A673 (cell line): ENCODE measurements at regions of chr1 and their contacts with region 1.

Region 1: GRCh38 chr1:161225534-161226319 is at the start of gene TOMM40L:
- DNase-seq: peak; percentile 100
- H3K4me3 ChIP-seq: peak within 1 kb of the TSS; percentile 78
- H3K27ac ChIP-seq: peak within 1 kb of the TSS; percentile 68
- H3K4me1 ChIP-seq: peaks cover 18% of the 10 kb centered on the region
- H3K27me3 ChIP-seq: no peaks in the 10 kb centered on the region
- CTCF ChIP-seq: peak; percentile 79
- total RNA-seq, gene TOMM40L: 14.0 TPM in 2 replicates

Region 2: DNA sequence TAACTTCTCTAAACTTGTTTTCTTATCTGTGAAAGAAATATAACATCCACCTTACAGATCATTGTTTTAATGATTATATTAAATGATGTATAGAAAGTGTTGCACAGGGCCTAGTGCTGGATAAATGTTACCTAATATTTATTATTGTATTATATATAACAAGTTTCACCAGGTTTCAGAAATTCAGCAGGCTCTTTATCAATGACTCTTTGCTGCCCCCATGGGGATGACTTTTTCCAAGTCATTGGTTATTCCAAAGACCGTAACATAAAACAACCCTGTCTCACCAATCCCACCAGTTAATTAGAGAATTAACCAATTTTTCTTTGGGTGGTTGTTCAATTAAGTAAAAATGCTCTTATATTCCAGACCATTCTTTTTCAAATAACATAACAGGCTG is 86.0 kb before region 1 on chr1:
- CTCF ChIA-PET with region 1: no interaction called
- POLR2A ChIA-PET with region 1: interaction called, 17 read pairs
- intact Hi-C with region 1: no loop called
- DNase-seq: peak; percentile 69
- H3K4me3 ChIP-seq: no peak overlapping the region
- H3K27ac ChIP-seq: no peak overlapping the region
- H3K4me1 ChIP-seq: no peaks in the 10 kb centered on the region
- H3K27me3 ChIP-seq: no peaks in the 10 kb centered on the region
- CTCF ChIP-seq: peak; percentile 67

Region 3: DNA sequence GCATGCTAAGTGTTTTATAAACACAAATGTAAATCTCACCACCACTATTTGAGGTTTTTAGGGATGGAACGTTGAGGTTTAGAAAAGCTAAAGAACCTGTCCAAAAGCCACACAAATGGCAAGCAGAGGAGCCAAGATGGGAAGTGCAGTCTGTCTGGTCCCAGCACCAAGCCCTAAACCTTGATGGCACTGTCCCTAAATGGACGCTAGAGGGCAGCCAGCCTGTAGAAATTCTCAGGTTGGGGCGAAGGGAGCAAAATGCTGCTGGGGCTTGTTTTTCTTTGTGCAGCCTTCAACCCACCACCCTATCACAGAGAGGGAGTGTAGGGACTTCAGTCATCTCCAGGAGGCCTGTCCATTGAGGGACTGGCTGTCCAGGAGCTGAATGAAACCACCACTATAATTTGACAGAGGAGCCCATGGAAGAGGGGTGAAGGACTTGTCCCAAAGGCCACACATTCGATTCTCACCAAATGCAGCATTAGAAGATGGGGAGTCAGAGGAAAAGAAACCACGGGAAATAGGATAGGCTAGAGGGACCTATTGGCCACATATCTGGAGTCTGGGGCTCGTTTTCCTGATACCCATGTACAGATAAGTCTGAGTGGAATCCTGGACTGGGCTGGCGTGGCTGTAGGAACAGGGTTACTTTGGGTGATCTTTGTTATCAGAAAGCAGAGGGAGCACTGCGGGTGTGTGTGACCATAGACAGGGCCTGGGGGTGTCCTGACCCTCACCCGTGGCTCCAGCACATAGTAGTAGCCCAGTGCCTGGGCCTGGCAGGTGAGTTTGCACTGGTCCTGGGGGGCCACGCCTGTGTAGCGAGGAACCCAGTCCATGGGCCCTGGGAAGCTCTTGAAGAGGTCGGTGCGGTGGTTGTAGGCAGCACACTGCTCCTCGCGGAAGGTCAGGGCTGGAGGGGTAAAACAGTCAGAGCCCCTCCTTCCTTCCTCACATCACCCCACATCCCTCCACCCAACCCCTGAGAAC is 33.0 kb before region 1 on chr1:
- CTCF ChIA-PET with region 1: interaction called, 7 read pairs
- POLR2A ChIA-PET with region 1: no interaction called
- intact Hi-C with region 1: loop called (anchors 1 kb)
- DNase-seq: peak; percentile 85
- H3K4me3 ChIP-seq: no peak overlapping the region
- H3K27ac ChIP-seq: no peak overlapping the region
- H3K4me1 ChIP-seq: peaks cover 21% of the 10 kb centered on the region
- H3K27me3 ChIP-seq: no peaks in the 10 kb centered on the region
- CTCF ChIP-seq: peak; percentile 91

Region 4: DNA sequence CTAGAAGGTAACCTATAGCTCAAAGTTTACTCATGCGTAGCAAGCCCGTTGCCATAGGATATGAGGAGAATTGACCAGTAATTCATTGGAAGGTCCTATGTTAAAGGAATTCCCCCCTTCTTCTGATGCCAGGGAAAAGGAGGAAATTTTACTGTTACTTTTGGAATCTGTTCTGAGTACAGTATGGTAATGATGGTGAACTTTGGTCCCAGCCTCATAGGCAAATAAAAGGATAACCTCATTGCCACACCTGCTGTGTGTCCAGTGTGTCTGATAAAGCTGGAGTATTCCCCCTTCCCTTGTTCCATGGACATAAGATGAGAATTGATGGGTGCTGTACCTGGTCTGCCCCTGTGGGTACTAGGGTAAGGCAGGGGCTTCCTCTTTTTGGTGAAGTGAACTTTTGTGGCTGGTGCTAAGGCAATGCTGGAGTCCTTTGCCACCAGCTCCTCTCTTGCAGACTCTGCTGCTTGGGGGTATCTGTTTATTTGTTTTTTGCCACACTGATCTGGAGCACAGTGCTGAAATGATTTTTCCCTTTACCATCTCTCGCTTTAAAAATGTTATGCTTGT is 61.8 kb after region 1 on chr1:
- CTCF ChIA-PET with region 1: interaction called, 15 read pairs
- POLR2A ChIA-PET with region 1: no interaction called
- intact Hi-C with region 1: loop called (anchors 1 kb)
- DNase-seq: no peak
- H3K4me3 ChIP-seq: no peak overlapping the region
- H3K27ac ChIP-seq: no peak overlapping the region
- H3K4me1 ChIP-seq: no peaks in the 10 kb centered on the region
- H3K27me3 ChIP-seq: peaks cover 12% of the 10 kb centered on the region
- CTCF ChIP-seq: no peak

Region 5: GRCh38 chr1:161382214-161383019 is 156.7 kb after region 1 on chr1:
- CTCF ChIA-PET with region 1: interaction called, 28 read pairs
- POLR2A ChIA-PET with region 1: no interaction called
- intact Hi-C with region 1: loop called (anchors 5 kb)
- DNase-seq: peak; percentile 76
- H3K4me3 ChIP-seq: no peak overlapping the region
- H3K27ac ChIP-seq: no peak overlapping the region
- H3K4me1 ChIP-seq: peaks cover 6% of the 10 kb centered on the region
- H3K27me3 ChIP-seq: no peaks in the 10 kb centered on the region
- CTCF ChIP-seq: peak; percentile 72

Region 6: GRCh38 chr1:161486806-161487741 is 261.3 kb after region 1 on chr1:
- CTCF ChIA-PET with region 1: no interaction called
- POLR2A ChIA-PET with region 1: no interaction called
- intact Hi-C with region 1: no loop called
- DNase-seq: peak; percentile 83
- H3K4me3 ChIP-seq: peak overlapping the region; percentile 16
- H3K27ac ChIP-seq: no peak overlapping the region
- H3K4me1 ChIP-seq: no peaks in the 10 kb centered on the region
- H3K27me3 ChIP-seq: peaks cover 38% of the 10 kb centered on the region
- CTCF ChIP-seq: peak; percentile 86

Region 7: DNA sequence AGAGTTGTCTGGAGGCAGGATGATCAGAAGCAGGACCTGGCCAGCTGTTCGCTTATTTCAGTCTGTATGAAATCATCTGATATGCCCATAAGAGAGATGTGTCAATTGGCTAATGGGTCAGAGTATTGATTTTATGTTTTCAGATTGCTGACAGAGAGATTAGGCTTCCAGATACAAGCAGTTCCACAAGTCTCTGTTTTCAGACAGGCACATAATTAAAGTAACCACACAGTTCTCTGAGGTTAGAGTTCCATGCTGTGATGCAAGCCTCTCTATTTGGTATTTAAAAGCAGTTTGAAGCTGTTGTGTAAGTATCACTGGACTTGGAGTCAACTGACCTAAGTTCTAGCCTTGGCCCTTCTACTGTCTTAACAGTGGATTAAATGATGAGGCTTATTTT is 590.5 kb after region 1 on chr1:
- CTCF ChIA-PET with region 1: no interaction called
- POLR2A ChIA-PET with region 1: no interaction called
- intact Hi-C with region 1: no loop called
- DNase-seq: no peak
- H3K4me3 ChIP-seq: no peak overlapping the region
- H3K27ac ChIP-seq: no peak overlapping the region
- H3K4me1 ChIP-seq: no peaks in the 10 kb centered on the region
- H3K27me3 ChIP-seq: no peaks in the 10 kb centered on the region
- CTCF ChIP-seq: no peak